ENCODE measurements at regions of chr19 and their contacts with region 1.

Region 1: GRCh38 chr19:30222428-30222873 is 149.7 kb upstream of the ZNF536 start:
- DNase-seq: no peak
- H3K4me3 ChIP-seq: peak overlapping the region in 5 of 8 donors; percentile 14 to 55 (median 28)
- H3K27ac ChIP-seq: no peak overlapping the region
- H3K4me1 ChIP-seq: peaks cover 0 to 50% (median 29%) of the 10 kb centered on the region in 6 donors
- H3K27me3 ChIP-seq: peaks cover 0 to 94% (median 64%) of the 10 kb centered on the region in 7 donors
- CTCF ChIP-seq: peak in 9 of 11 experiments; percentile 15 to 76 (median 53)
- POLR2A ChIP-seq: no peak

Region 2: GRCh38 chr19:30649934-30650614 is 427.6 kb after region 1 on chr19:
- intact Hi-C with region 1: loop called (anchors 5 kb)
- DNase-seq: no peak
- H3K4me3 ChIP-seq: no peak overlapping the region
- H3K27ac ChIP-seq: no peak overlapping the region
- H3K4me1 ChIP-seq: no peaks in the 10 kb centered on the region
- H3K27me3 ChIP-seq: peaks cover 0 to 57% (median 11%) of the 10 kb centered on the region in 7 donors
- CTCF ChIP-seq: peak in 8 of 11 experiments; percentile 21 to 59 (median 52)
- POLR2A ChIP-seq: no peak